ENCODE measurements at regions of chr17 and their contacts with region 1.

Region 1: DNA sequence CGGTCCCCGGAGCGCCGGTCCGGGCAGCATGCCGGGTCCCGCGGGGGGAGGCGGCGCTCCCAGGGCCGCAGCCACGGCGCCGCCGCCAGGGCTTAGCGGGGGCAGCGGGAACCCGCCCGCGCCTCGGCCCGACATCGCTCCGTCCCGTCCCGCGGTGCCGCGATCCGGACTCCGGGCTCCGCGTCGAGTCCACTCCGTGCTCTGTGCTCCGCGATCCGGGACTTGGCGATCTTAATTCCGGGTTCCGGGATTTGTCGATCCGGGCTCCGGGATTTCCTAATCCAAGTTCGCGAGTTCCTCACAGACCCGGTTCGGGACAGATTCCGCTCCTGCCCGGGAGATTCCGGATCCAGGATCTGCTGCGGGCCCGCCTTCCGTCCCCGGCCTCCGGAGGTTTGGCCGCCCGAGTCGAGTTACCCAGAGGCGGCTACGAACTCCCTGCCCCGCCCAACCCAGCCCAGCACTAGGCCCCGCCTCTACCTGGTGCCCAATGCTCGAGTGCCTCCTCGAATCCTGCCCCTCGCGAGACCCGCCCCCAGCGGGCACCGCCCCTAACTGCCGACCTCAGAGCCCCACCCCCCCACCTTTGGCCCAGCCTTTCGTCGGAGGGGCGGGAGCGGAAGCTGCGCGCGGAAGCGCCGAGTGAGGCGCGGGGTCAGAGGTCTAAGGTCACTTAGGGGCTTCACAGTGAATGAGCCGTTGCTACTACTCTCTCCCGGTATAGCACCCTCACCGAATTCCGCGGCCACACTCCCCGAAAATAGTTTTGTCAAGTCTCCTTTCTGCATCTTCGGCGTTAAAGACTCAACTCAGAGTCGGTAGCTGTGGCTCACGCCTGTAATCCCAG is at the start of gene SMARCD2:
- DNase-seq: peak; percentile 94 to 99 (median 96)
- ATAC-seq: peak; percentile 90
- H3K4me3 ChIP-seq: peak within 1 kb of the TSS; percentile 95
- H3K27ac ChIP-seq: peak within 1 kb of the TSS; percentile 93
- H3K4me1 ChIP-seq: peaks cover 23 to 45% of the 10 kb centered on the region in 2 experiments
- H3K27me3 ChIP-seq: no peaks in the 10 kb centered on the region
- CTCF ChIP-seq: no peak
- EP300 ChIP-seq: peak; percentile 72
- POLR2A ChIP-seq: peak; percentile 89
- RAD21 ChIP-seq: peak in 1 of 2 experiments; percentile 18; a peak in 1 of 4 replicates
- polyA plus RNA-seq, gene SMARCD2: 1.7 to 5.7 TPM

Region 2: DNA sequence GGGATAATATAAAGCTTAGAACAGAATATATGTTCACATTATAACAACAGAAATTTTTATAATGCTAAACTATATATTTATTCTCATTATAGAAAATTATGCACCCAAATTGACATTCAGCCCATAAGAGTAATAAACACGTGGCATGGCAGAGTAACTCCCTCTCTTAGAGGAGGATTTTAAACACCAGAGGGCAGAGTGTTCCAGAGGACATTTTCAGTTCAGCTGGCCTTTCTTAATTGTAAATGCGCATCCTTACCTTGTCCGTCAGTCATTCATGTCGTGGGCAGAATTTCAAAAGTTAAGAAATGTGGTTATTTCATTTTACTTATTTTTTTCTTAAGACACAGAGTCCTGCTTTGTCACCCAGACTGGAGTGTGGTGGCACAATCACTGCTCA is 729.6 kb before region 1 on chr17:
- CTCF ChIA-PET with region 1: no interaction called
- POLR2A ChIA-PET with region 1: no interaction called
- in situ Hi-C with region 1: no loop called
- intact Hi-C with region 1: no loop called
- DNase-seq: peak; percentile 7 to 20 (median 12)
- ATAC-seq: peak; percentile 40; the same call in 1 of the 3 replicates
- H3K4me3 ChIP-seq: no peak overlapping the region
- H3K27ac ChIP-seq: no peak overlapping the region
- H3K4me1 ChIP-seq: no peaks in the 10 kb centered on the region
- H3K27me3 ChIP-seq: no peaks in the 10 kb centered on the region
- CTCF ChIP-seq: peak in 2 of 3 experiments; percentile 29 to 43; a peak in 3 of 6 replicates
- EP300 ChIP-seq: no peak
- POLR2A ChIP-seq: no peak
- RAD21 ChIP-seq: peak in 1 of 2 experiments; percentile 27; a peak in 1 of 4 replicates

Region 3: GRCh38 chr17:63434876-63435684 is 407.7 kb before region 1 on chr17:
- CTCF ChIA-PET with region 1: no interaction called
- POLR2A ChIA-PET with region 1: no interaction called
- in situ Hi-C with region 1: loop called (anchors 25 kb)
- intact Hi-C with region 1: loop called (anchors 10 kb)
- DNase-seq: no peak
- ATAC-seq: no peak
- H3K4me3 ChIP-seq: no peak overlapping the region
- H3K27ac ChIP-seq: peak overlapping the region; percentile 12; the same call in 1 of the 3 replicates
- H3K4me1 ChIP-seq: peaks cover 59 to 74% of the 10 kb centered on the region in 2 experiments
- H3K27me3 ChIP-seq: no peaks in the 10 kb centered on the region
- CTCF ChIP-seq: peak; percentile 34 to 43 (median 40); a peak in 4 of 6 replicates
- EP300 ChIP-seq: no peak
- POLR2A ChIP-seq: no peak
- RAD21 ChIP-seq: peak in 1 of 2 experiments; percentile 19; a peak in 1 of 4 replicates